Dorsolateral prefrontal cortex (tissue), 120 donors: ENCODE measurements at regions of chr13 and their contacts with region 1.

Region 1: DNA sequence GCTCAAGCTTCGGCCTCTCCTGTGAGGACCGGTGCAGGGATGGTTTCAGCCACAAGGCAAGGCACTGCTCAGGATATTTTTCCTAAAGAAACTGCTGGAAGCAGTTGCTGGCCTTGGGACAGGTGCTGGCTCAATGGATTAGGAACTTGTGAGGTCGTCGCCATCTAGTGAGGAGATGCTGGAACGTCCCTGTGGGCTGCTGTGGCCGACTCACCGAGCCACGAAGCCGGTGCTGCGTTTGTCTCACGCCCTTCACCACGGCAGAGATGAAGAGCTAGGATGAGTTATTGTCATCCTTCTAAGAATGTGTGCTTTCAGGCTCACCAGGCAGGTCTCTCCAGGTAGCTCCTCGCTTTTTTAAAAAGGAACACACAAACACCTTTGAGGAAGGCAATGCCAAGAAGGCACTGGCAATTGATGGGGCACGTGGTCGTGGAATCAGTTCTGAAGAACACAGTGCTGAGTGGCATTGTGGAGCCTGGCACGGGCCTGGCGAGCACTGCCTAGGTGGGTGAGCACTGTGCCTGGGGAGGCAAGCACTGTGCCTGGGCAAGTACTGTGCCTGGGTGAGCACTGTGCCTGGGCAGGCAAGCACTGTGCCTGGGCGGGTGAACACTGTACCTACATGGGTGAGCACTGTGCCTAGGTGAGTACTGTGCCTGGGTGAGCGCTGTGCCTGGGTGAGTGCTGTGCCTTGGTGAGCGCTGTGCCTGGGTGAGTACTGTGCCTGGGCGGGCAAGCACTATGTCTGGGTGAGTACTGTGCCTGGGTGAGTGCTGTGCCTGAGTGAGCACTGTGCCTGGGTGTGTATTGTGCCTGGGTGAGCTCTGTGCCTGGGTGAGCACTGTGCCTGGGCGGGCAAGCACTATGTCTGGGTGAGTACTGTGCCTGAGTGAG is 140.4 kb downstream of the TEX29 start:
- DNase-seq: peak; percentile 44 to 75 (median 72)
- H3K4me3 ChIP-seq: no peak overlapping the region
- H3K27ac ChIP-seq: peak overlapping the region in 2 of 59 donors; percentile 27 to 76
- H3K27me3 ChIP-seq: peaks cover 0 to 46% (median 0%) of the 10 kb centered on the region in 45 donors
- CTCF ChIP-seq: peak in 54 of 56 donors; percentile 34 to 83 (median 66)

Region 2: GRCh38 chr13:111066544-111066943 is 394.3 kb before region 1 on chr13:
- intact Hi-C with region 1: loop called in 1 of 2 experiments (anchors 5 kb)
- DNase-seq: no peak
- H3K4me3 ChIP-seq: peak overlapping the region in 38 of 59 donors; percentile 16 to 84 (median 70)
- H3K27ac ChIP-seq: peak overlapping the region in 2 of 59 donors; percentile 21 to 28
- H3K27me3 ChIP-seq: peaks cover 0 to 3% (median 0%) of the 10 kb centered on the region in 45 donors
- CTCF ChIP-seq: no peak

Region 3: GRCh38 chr13:111429064-111429558 is 31.7 kb before region 1 on chr13:
- intact Hi-C with region 1: loop called in 1 of 2 experiments (anchors 5 kb)
- DNase-seq: peak in 4 of 10 donors; percentile 11 to 66 (median 51)
- H3K4me3 ChIP-seq: peak overlapping the region in 1 of 59 donors; percentile 31
- H3K27ac ChIP-seq: no peak overlapping the region
- H3K27me3 ChIP-seq: peaks cover 0 to 72% (median 4%) of the 10 kb centered on the region in 45 donors
- CTCF ChIP-seq: peak; percentile 41 to 74 (median 62)

Region 4: GRCh38 chr13:111657013-111657412 is 196.2 kb after region 1 on chr13:
- intact Hi-C with region 1: no loop called
- DNase-seq: peak in 1 of 10 donors; percentile 5
- H3K4me3 ChIP-seq: no peak overlapping the region
- H3K27ac ChIP-seq: peak overlapping the region in 14 of 59 donors; percentile 18 to 79 (median 69)
- H3K27me3 ChIP-seq: peaks cover 0 to 5% (median 0%) of the 10 kb centered on the region in 45 donors
- CTCF ChIP-seq: no peak